Colonic mucosa (tissue), 4 donors: ENCODE measurements at regions of chr2 and their contacts with region 1.

Region 1: DNA sequence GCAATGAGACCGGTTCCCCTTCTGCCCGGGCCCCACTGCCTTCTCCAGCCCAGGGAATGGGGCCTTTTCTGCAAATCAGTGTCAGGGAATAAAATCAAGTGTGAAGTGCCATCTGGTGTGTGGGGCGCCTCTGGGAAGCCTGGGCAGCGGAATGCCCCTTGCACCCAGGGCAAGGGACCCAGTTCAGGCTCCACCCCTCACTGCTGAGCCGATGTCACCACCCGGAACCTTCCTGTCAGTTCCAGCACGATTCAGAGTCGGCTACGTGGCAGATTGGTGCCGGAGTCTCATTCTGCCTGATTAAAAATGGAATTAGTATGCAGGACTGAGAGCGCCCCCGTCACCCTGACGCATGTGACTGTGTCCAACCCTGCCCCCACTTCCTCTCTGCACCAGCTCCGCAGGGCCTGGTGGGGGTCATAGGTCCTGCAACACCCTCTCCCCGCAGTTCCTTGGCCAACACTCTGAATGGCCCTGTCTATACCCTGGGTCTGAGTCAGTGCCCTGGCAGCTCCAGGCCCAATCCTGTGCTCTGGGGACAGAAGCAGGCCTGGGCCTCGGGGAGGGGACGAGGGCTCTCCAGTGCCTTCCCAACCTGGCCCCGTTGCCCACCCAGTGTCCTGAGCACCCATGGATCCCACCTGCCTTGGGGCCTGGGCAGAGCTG is 8.2 kb upstream of the ALPI start:
- DNase-seq: peak; percentile 52
- H3K4me3 ChIP-seq: no peak overlapping the region
- H3K27ac ChIP-seq: no peak overlapping the region
- H3K4me1 ChIP-seq: no peaks in the 10 kb centered on the region
- H3K27me3 ChIP-seq: no peaks in the 10 kb centered on the region
- CTCF ChIP-seq: no peak

Region 2: DNA sequence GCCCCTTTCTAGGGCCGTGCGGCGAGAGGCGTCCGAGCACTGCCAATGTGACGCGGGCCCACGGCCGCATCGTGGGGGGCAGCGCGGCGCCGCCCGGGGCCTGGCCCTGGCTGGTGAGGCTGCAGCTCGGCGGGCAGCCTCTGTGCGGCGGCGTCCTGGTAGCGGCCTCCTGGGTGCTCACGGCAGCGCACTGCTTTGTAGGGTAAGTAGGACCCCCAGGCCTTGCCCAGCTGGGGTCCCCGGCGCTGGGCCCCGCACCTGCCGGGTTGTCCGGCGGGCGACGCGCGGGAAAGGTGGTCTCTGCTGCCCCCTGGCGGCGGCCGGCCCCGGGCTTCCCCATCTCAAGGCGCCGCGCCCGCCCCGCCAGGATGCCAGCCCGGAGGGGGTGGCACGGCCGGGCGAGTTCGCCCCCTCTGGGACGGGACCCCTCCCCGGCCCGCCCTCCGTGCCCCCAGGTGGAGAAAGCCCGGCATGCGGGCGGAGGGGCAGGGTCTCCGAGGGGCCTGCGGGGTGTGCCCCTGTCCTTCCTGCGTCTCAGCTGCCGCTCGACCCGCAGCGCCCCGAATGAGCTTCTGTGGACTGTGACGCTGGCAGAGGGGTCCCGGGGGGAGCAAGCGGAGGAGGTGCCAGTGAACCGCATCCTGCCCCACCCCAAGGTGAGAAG is 74.3 kb after region 1 on chr2:
- intact Hi-C with region 1: loop called (anchors 2 kb)
- DNase-seq: peak; percentile 57
- H3K4me3 ChIP-seq: no peak overlapping the region
- H3K27ac ChIP-seq: no peak overlapping the region
- H3K4me1 ChIP-seq: peaks cover 3% of the 10 kb centered on the region
- H3K27me3 ChIP-seq: peaks cover 40% of the 10 kb centered on the region
- CTCF ChIP-seq: peak; percentile 84

Region 3: DNA sequence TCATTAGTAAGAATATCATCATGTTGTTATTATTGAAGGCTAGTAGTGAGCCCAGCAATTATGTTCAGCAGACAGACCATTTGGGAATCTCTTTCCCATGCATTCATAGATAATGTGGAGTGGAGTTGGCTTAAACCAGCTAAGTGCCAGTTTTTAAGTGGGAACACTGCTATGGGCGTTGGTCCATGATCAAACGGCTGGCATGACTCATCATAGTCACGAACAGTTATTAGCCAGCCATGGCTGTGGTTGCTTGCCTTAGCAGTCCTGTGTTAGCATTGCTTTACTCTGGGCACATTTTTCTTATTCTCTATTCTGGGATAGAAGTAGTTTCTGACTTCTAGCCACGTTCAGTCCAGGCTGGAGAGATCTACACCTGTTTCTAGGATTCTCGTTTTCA is 120.4 kb after region 1 on chr2:
- intact Hi-C with region 1: no loop called
- DNase-seq: peak; percentile 58
- H3K4me3 ChIP-seq: no peak overlapping the region
- H3K27ac ChIP-seq: no peak overlapping the region
- H3K4me1 ChIP-seq: peaks cover 18% of the 10 kb centered on the region
- H3K27me3 ChIP-seq: no peaks in the 10 kb centered on the region
- CTCF ChIP-seq: no peak

Region 4: DNA sequence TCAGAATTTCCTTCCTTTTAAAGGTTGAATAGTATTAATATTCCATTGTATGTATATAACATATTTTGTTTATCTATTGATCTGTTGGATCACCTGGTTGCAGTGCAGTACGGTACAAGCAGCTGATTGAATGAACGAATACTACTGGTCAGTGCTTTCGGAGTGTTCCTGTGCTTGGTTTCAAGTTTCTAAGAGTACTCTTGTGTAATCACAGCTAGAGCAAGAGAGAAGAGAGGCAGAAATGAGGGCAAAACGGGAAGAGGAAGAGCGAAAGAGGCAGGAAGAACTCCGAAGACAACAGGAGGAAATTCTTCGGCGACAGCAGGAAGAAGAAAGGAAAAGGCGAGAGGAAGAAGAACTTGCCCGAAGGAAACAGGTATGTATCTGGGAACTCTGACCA is 368.9 kb after region 1 on chr2:
- intact Hi-C with region 1: no loop called
- DNase-seq: no peak
- H3K4me3 ChIP-seq: no peak overlapping the region
- H3K27ac ChIP-seq: no peak overlapping the region
- H3K4me1 ChIP-seq: no peaks in the 10 kb centered on the region
- H3K27me3 ChIP-seq: no peaks in the 10 kb centered on the region
- CTCF ChIP-seq: no peak